ENCODE measurements at regions of chr14 and their contacts with region 1.

Region 1: DNA sequence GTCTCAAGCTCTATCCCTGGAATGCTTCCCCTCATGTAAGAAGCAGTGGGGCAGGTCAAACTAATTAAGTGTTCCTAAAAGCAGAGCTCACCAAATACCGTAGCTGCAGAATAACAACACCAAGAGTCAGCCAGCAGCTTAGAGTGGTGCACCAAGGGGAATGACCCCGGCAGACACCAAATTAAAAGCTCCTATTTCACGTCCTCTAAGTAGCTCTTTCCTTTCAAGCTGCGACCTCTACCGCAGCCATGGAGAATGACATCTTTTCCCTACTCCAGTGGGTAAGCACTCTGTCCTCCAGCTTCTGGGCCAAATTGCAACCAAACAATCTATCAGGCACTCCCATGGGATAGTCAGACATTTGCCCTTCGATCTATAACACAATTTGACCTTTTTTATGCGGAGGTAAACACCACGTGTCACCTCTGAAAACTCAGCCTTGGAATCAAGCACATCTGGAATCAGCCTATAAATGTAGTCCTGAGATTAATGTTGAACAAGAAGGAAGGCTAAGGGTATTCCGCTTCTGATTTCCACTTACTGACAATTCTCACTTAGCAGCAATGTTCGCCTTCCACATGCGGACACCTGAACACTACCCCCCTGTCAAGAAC is 67.6 kb upstream of the CDKN3 start:
- DNase-seq: peak; percentile 41
- H3K4me3 ChIP-seq: no peak overlapping the region
- H3K27ac ChIP-seq: no peak overlapping the region
- H3K4me1 ChIP-seq: no peaks in the 10 kb centered on the region
- H3K27me3 ChIP-seq: no peaks in the 10 kb centered on the region
- CTCF ChIP-seq: peak; percentile 56

Region 2: DNA sequence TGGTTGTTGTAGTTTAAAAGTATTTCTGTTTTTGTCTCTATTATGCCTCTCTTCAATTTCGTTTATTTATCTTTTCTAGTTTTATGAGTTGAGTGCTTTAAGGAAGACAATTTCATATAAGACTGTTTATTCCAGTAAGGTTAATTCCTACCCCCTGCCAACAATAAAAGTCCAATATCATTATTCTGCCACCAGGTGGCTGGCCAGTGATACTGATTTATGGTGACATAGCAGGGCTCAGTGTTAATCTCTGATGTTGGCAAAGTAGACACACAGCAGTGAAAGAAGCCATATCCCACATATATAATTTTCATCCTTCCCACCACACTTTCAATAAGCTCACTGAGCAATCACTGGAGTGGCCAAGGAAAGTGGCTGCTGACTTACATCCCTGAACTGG is 303.5 kb before region 1 on chr14:
- intact Hi-C with region 1: loop called (anchors 10 kb)
- DNase-seq: no peak
- H3K4me3 ChIP-seq: no peak overlapping the region
- H3K27ac ChIP-seq: no peak overlapping the region
- H3K4me1 ChIP-seq: no peaks in the 10 kb centered on the region
- H3K27me3 ChIP-seq: no peaks in the 10 kb centered on the region
- CTCF ChIP-seq: no peak

Region 3: GRCh38 chr14:54175298-54175942 is 153.8 kb before region 1 on chr14:
- intact Hi-C with region 1: loop called (anchors 5 kb)
- DNase-seq: peak; percentile 83
- H3K4me3 ChIP-seq: no peak overlapping the region
- H3K27ac ChIP-seq: no peak overlapping the region
- H3K4me1 ChIP-seq: no peaks in the 10 kb centered on the region
- H3K27me3 ChIP-seq: no peaks in the 10 kb centered on the region
- CTCF ChIP-seq: peak; percentile 79

Region 4: DNA sequence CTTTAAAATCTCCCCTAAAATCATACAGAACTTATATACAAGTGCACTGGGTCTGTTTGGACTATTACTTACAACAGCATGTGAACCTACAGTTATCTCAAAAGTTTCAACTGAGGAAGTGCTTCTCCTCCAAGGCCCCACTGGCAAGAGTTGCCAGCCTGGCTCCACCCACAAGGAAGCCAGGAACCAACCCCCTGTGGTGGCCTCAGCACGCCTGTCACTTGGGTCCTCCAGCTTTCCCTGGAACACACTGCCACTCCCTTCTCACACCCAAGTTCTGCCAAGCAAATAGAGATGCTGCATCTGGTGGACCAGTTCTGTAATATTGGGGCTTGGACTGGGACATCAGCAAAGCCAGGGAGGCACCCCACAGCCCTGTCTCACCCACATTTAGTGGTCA is 458.1 kb after region 1 on chr14:
- intact Hi-C with region 1: no loop called
- DNase-seq: no peak
- H3K4me3 ChIP-seq: no peak overlapping the region
- H3K27ac ChIP-seq: no peak overlapping the region
- H3K4me1 ChIP-seq: no peaks in the 10 kb centered on the region
- H3K27me3 ChIP-seq: no peaks in the 10 kb centered on the region
- CTCF ChIP-seq: no peak

Region 5: GRCh38 chr14:54814076-54814475 is 484.9 kb after region 1 on chr14:
- intact Hi-C with region 1: no loop called
- DNase-seq: no peak
- H3K4me3 ChIP-seq: no peak overlapping the region
- H3K27ac ChIP-seq: no peak overlapping the region
- H3K4me1 ChIP-seq: no peaks in the 10 kb centered on the region
- H3K27me3 ChIP-seq: no peaks in the 10 kb centered on the region
- CTCF ChIP-seq: no peak

Measured in colonic mucosa (tissue), 4 donors.